Mucosa of descending colon (tissue), 3 donors: ENCODE measurements at regions of chr19 and their contacts with region 1.

Region 1: DNA sequence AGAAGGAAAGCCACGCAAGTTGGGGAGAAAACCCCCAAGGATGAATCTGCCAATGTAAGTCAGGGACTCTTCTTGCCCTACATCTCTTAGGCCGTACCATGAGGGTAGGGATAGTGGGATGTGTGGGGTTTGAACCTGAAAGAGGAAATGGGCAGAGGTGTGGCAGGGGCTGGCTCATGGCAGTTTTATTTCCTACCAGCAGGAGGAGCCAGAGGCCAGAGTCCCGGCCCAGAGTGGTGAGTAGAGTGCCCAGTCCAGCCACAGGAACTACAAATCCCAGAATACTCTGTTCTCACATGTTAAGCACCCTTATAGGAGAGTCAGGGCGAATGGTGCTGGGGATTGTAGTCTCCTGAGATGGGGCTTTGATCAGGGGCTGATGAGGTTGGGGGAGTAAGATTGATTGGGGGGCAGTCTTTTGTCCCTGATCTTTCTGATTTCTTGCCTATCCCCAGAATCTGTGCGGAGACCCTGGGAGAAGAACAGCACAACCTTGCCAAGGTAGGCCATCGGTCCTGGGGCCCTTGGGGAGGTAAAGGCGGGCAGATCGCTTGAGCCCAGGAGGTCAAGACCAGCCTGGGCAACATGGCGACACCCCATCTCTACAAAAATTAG is 16.5 kb downstream of the VASP start:
- DNase-seq: peak; percentile 79 to 86 (median 80)
- ATAC-seq: peak; percentile 85
- H3K4me3 ChIP-seq: no peak overlapping the region
- H3K4me1 ChIP-seq: peaks cover 31% of the 10 kb centered on the region
- CTCF ChIP-seq: peak; percentile 80

Region 2: GRCh38 chr19:45508861-45509691 is 14.7 kb before region 1 on chr19:
- intact Hi-C with region 1: loop called in 1 of 2 experiments (anchors 2 kb)
- DNase-seq: peak; percentile 79 to 90 (median 88)
- ATAC-seq: peak; percentile 32
- H3K4me3 ChIP-seq: peak overlapping the region; percentile 88
- H3K4me1 ChIP-seq: peaks cover 54% of the 10 kb centered on the region
- CTCF ChIP-seq: no peak

Region 3: GRCh38 chr19:45746866-45747265 is 223.1 kb after region 1 on chr19:
- intact Hi-C with region 1: no loop called
- DNase-seq: no peak
- ATAC-seq: no peak
- H3K4me3 ChIP-seq: no peak overlapping the region
- H3K4me1 ChIP-seq: no peaks in the 10 kb centered on the region
- CTCF ChIP-seq: no peak